HepG2 (cell line): ENCODE measurements at regions of chr13 and their contacts with region 1.

Region 1: DNA sequence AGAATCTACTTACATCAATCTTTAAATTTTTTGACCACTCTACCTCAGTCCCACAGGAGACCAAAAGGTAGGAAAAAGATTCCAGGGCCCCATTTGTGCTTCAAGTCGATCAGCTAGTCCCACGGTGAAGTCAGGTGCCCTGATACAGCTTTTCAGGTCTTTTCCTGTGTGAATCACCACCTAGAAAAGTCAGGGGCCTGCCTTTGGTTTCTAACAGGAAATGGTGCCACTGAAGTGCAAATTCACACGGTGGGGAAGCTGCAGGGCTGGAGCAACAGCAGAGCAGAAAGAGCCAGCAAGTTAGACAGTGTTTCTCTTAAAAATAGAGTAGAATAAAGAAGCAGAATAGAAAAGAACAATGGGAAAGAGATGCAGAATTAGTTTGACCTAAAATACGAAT is 107.5 kb downstream of the KLF12 start:
- DNase-seq: no peak
- ATAC-seq: no peak
- H3K4me3 ChIP-seq: no peak overlapping the region
- H3K27ac ChIP-seq: no peak overlapping the region
- H3K4me1 ChIP-seq: peaks cover 35% of the 10 kb centered on the region
- H3K27me3 ChIP-seq: no peaks in the 10 kb centered on the region
- CTCF ChIP-seq: no peak
- EP300 ChIP-seq: no peak
- POLR2A ChIP-seq: no peak
- RAD21 ChIP-seq: no peak

Region 2: DNA sequence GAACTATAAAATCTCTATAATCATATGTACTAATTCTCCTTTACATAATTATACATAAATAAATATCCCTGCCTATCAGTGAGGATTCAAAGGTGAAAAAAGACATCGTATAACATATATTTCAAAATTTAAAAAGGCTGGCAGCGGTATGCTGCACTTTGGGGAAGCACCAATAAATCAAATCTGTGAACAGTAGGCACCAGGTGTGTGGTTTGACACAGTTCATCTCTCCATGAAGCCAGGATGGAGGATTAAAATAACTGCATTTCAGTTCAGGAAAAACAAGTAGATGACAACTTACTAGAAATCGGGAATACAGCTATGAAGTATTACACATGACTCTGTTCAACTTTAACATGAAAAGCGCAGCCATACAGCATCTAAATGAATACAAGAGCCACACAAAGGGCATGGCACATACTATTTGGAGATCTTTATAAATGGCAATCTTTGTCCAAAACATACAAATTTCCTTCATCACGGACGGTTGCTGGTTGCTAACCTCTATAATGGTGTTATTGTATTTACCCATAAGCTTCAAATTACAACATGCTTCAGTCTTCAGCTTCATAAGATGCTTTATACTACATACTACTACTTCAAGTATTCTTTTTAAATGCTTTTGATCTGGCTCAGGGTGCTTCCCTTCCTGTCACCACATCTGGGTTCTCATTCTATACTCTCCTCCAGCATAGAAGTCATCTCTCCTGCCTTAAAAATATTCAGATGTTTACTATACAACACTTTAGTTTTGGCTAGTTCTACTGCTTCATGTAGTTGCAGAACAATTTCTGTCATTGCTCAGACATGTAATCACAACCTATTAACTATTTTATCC is 21.2 kb before region 1 on chr13:
- CTCF ChIA-PET with region 1: no interaction called
- POLR2A ChIA-PET with region 1: no interaction called
- in situ Hi-C with region 1: no loop called
- intact Hi-C with region 1: no loop called
- DNase-seq: no peak
- ATAC-seq: no peak
- H3K4me3 ChIP-seq: no peak overlapping the region
- H3K27ac ChIP-seq: no peak overlapping the region
- H3K4me1 ChIP-seq: peaks cover 15% of the 10 kb centered on the region
- H3K27me3 ChIP-seq: no peaks in the 10 kb centered on the region
- CTCF ChIP-seq: no peak
- EP300 ChIP-seq: no peak
- POLR2A ChIP-seq: no peak
- RAD21 ChIP-seq: no peak

Region 3: GRCh38 chr13:74080762-74081161 is 54.0 kb after region 1 on chr13:
- CTCF ChIA-PET with region 1: no interaction called
- POLR2A ChIA-PET with region 1: no interaction called
- in situ Hi-C with region 1: no loop called
- intact Hi-C with region 1: loop called (anchors 10 kb)
- DNase-seq: no peak
- ATAC-seq: no peak
- H3K4me3 ChIP-seq: no peak overlapping the region
- H3K27ac ChIP-seq: no peak overlapping the region
- H3K4me1 ChIP-seq: peaks cover 45% of the 10 kb centered on the region
- H3K27me3 ChIP-seq: no peaks in the 10 kb centered on the region
- CTCF ChIP-seq: no peak
- EP300 ChIP-seq: no peak
- POLR2A ChIP-seq: no peak
- RAD21 ChIP-seq: no peak

Region 4: DNA sequence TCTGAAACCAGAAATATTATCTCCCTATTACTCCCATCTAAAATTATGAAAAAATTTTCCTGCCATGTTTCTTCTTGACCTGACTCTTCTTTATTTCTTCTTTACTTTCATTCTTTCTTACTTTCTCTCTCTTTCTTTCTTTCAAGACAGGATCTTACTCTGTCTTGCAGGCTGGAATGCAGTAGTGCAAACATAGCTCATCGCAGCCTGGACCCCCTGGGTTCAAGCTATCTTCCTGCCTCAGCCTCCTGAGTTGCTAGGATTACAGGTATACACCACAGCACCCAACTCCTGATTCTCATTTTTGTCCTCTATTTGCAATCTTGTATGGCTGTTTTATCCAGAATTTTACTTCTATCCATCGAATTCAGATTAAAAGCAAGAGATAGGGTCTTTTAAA is 824.1 kb after region 1 on chr13:
- CTCF ChIA-PET with region 1: no interaction called
- POLR2A ChIA-PET with region 1: no interaction called
- in situ Hi-C with region 1: no loop called
- intact Hi-C with region 1: no loop called
- DNase-seq: no peak
- ATAC-seq: no peak
- H3K4me3 ChIP-seq: no peak overlapping the region
- H3K27ac ChIP-seq: no peak overlapping the region
- H3K4me1 ChIP-seq: no peaks in the 10 kb centered on the region
- H3K27me3 ChIP-seq: no peaks in the 10 kb centered on the region
- CTCF ChIP-seq: no peak
- EP300 ChIP-seq: no peak
- POLR2A ChIP-seq: no peak
- RAD21 ChIP-seq: no peak